CD4-positive, alpha-beta memory T cell (primary cell): ENCODE measurements at regions of chr19 and their contacts with region 1.

Region 1: DNA sequence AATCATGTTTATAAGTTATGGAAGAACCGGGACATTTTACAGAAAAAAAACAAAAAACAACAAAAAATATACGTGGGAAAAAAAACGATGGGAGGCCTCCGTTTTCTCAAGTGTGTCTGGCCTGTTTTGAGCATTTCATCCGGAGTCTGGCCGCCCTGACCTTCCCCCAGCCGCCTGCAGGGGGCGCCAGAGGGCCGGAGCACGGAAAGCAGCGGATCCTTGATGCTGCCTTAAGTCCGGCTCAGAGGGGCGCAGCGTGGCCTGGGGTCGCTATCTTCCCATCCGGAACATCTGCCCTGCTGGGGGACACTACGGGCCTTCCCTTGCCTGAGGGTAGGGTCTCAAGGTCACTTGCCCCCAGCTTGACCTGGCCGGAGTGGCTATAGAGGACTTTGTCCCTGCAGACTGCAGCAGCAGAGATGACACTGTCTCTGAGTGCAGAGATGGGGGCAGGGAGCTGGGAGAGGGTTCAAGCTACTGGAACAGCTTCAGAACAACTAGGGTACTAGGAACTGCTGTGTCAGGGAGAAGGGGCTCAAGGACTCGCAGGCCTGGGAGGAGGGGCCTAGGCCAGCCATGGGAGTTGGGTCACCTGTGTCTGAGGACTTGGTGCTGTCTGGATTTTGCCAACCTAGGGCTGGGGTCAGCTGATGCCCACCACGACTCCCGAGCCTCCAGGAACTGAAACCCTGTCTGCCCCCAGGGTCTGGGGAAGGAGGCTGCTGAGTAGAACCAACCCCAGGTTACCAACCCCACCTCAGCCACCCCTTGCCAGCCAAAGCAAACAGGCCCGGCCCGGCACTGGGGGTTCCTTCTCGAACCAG is 1.8 kb upstream of the APOE start:
- DNase-seq: peak; percentile 61 to 70 (median 63)
- H3K4me3 ChIP-seq: no peak overlapping the region
- H3K4me3 Mint-ChIP-seq: no peak overlapping the region
- H3K27ac ChIP-seq: no peak overlapping the region
- H3K27ac Mint-ChIP-seq: peak overlapping the region in 2 of 7 donors; percentile 19 to 60
- H3K4me1 ChIP-seq: no peaks in the 10 kb centered on the region
- H3K4me1 Mint-ChIP-seq: peaks cover 7 to 9% (median 8%) of the 10 kb centered on the region in 4 donors
- H3K27me3 ChIP-seq: peaks cover 12% of the 10 kb centered on the region
- H3K27me3 Mint-ChIP-seq: peaks cover 17% of the 10 kb centered on the region in 2 donors

Region 2: DNA sequence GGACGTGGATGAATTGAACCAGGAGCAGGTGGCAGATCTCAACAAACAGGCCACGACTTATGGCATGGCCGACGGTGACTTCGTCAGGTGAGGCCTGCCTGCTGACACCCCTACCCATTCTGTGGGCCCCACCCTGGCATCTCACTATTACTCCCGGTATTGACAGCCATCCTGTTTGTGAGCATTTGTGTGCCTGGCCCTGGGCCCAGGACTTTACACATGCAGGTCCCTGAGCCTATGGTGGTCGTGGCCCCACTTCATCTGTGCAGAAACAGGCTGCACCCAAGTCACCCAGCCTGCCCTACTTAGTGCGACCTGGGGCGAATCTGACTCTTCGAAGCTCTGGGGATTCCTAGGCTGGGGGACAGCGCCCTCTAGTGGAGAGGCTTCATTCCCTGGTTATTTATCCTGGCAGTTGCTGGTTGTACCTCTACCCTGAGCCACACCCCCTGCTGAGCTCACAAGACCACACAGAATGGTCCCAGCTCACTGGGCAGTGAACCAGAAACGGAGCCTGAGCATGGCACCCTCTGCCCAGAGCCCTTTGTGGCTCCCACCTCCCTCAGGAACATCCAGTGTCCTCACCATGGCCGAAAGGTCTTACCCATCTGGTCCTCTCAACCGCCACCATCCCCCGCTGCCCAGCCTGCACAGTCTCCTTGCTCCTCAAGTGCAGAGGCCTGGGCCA is 155.6 kb after region 1 on chr19:
- CTCF ChIA-PET with region 1: interaction called, 5 read pairs
- POLR2A ChIA-PET with region 1: no interaction called
- intact Hi-C with region 1: loop called (anchors 1 kb)
- DNase-seq: peak; percentile 76 to 84 (median 81)
- H3K4me3 ChIP-seq: no peak overlapping the region
- H3K4me3 Mint-ChIP-seq: no peak overlapping the region
- H3K27ac ChIP-seq: no peak overlapping the region
- H3K27ac Mint-ChIP-seq: peak overlapping the region in 6 of 7 donors; percentile 57 to 87 (median 82)
- H3K4me1 ChIP-seq: no peaks in the 10 kb centered on the region
- H3K4me1 Mint-ChIP-seq: peaks cover 0 to 6% (median 4%) of the 10 kb centered on the region in 4 donors
- H3K27me3 ChIP-seq: no peaks in the 10 kb centered on the region
- H3K27me3 Mint-ChIP-seq: no peaks in the 10 kb centered on the region

Region 3: DNA sequence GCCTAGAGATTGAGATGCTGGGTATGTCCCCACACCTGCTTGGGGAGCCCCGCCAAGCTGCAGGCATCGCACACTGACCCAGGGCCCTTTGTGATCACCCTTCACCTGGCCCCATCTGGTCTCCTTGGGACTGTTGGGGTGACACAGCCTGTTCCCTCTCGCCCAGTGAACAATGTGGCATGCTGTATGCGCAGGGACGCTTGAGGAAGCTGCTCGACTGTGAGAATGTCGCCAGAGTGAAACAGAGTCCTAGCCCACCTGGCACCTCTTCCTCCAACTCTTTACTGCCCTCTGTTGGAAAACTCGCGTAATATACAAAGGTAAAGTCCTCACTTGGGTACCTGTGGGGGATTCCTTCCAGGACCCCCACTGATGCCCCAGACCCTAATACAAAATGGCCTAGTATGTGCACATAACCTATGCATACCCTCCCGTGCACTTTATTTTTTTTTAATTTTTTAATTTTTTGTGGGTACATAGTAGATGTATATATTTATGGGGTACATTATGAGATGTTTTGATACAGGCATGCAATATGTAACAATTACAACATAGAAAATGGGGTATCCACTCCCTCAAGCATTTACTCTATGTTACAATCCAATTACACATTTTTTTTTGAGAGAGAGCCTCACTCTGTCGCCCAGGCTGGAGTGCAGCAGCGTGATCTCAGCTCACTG is 283.7 kb after region 1 on chr19:
- CTCF ChIA-PET with region 1: interaction called, 3 read pairs
- POLR2A ChIA-PET with region 1: no interaction called
- intact Hi-C with region 1: loop called (anchors 1 kb)
- DNase-seq: peak in 4 of 5 donors; percentile 53 to 56 (median 54)
- H3K4me3 ChIP-seq: no peak overlapping the region
- H3K4me3 Mint-ChIP-seq: no peak overlapping the region
- H3K27ac ChIP-seq: no peak overlapping the region
- H3K27ac Mint-ChIP-seq: no peak overlapping the region
- H3K4me1 ChIP-seq: peaks cover 5% of the 10 kb centered on the region
- H3K4me1 Mint-ChIP-seq: peaks cover 12 to 23% (median 16%) of the 10 kb centered on the region in 4 donors
- H3K27me3 ChIP-seq: no peaks in the 10 kb centered on the region
- H3K27me3 Mint-ChIP-seq: no peaks in the 10 kb centered on the region

Region 4: DNA sequence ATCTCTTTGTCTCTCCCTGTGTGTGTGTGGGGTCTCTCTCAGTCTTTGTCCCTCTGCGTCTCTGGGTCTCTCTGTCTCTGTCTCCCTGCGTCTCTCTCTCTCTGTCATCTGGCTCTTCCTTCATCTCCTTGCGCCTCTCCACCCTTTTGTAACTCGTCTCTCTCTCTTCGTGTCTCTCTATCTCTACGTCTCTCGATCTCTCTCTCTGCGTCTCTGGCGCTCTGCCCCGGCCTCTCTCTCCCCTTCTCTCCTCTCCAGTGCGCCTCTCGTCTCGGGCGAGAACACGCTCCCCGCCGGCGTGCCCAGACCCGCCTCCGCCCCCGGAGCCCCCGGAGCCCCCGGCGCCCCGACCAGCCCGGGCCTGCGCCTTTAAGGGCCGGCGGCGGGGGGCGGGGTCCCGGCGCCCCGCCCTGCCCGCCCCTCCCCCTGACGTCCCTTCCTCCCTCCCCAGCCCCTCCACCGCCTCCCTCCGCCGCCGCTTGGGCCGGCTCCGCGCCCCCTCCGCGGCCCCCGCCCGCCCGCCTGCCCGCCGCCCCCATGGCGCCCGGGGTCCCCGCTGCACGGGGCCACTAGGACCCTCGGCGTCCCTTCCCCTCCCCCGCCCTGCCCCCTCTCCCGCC is 347.1 kb after region 1 on chr19 and contains the start of gene MARK4:
- CTCF ChIA-PET with region 1: interaction called, 3 read pairs
- POLR2A ChIA-PET with region 1: no interaction called
- intact Hi-C with region 1: loop called (anchors 2 kb)
- DNase-seq: peak; percentile 48 to 64 (median 50)
- H3K4me3 ChIP-seq: peak within 1 kb of the TSS; percentile 57 to 66
- H3K4me3 Mint-ChIP-seq: peak within 1 kb of the TSS; percentile 89 to 99 (median 94)
- H3K27ac ChIP-seq: peak within 1 kb of the TSS; percentile 56
- H3K27ac Mint-ChIP-seq: peak within 1 kb of the TSS; percentile 65 to 96 (median 92)
- H3K4me1 ChIP-seq: peaks cover 50% of the 10 kb centered on the region
- H3K4me1 Mint-ChIP-seq: peaks cover 19 to 49% (median 31%) of the 10 kb centered on the region in 4 donors
- H3K27me3 ChIP-seq: no peaks in the 10 kb centered on the region
- H3K27me3 Mint-ChIP-seq: no peaks in the 10 kb centered on the region
- total RNA-seq, gene MARK4: 24.3 to 25.2 TPM

Region 5: GRCh38 chr19:45336696-45337251 is 433.0 kb after region 1 on chr19:
- CTCF ChIA-PET with region 1: interaction called, 3 read pairs
- POLR2A ChIA-PET with region 1: no interaction called
- intact Hi-C with region 1: loop called (anchors 2 kb)
- DNase-seq: no peak
- H3K4me3 ChIP-seq: no peak overlapping the region
- H3K4me3 Mint-ChIP-seq: no peak overlapping the region
- H3K27ac ChIP-seq: no peak overlapping the region
- H3K27ac Mint-ChIP-seq: no peak overlapping the region
- H3K4me1 ChIP-seq: no peaks in the 10 kb centered on the region
- H3K4me1 Mint-ChIP-seq: peaks cover 2 to 6% (median 4%) of the 10 kb centered on the region in 4 donors
- H3K27me3 ChIP-seq: peaks cover 5% of the 10 kb centered on the region
- H3K27me3 Mint-ChIP-seq: peaks cover 18 to 22% of the 10 kb centered on the region in 2 donors